ENCODE measurements at regions of chr7 and their contacts with region 1.

Region 1: GRCh38 chr7:142782922-142783900 is 12.4 kb downstream of the PRSS2 start:
- DNase-seq: peak; percentile 27
- H3K4me3 ChIP-seq: peak overlapping the region; percentile 42
- H3K27me3 ChIP-seq: no peaks in the 10 kb centered on the region; the same call in none of the 2 replicates
- CTCF ChIP-seq: peak; percentile 93

Region 2: GRCh38 chr7:142459551-142459963 is 323.7 kb before region 1 on chr7:
- CTCF ChIA-PET with region 1: interaction called, 20 read pairs
- POLR2A ChIA-PET with region 1: interaction called, 4 read pairs
- DNase-seq: peak; percentile 41
- H3K4me3 ChIP-seq: no peak overlapping the region
- H3K27me3 ChIP-seq: no peaks in the 10 kb centered on the region
- CTCF ChIP-seq: peak; percentile 75

Region 3: DNA sequence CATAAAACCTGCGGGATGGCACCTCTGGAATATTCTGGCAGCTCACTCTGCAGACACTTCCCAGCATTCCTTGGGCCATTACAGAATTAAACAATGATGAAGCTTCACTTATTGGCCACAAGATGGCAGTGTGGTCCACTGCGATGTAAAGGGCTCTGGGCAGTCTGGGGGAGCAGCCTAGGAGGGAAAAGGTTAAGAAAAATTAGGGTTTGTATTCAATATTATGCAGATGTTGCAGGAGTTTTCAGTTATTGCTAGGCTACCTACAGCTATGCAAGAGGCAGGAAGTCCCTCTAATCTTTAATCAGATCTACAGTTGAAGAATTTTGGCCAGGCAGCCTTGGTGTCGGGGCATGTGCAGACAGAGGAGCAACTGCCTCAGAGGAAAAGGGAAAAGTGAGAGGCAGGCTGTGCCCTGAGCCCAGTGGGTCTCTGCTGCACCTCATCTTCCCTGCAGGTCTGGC is 267.1 kb before region 1 on chr7:
- CTCF ChIA-PET with region 1: interaction called, 40 read pairs
- POLR2A ChIA-PET with region 1: no interaction called
- DNase-seq: no peak
- H3K4me3 ChIP-seq: no peak overlapping the region
- H3K27me3 ChIP-seq: peaks cover 2% of the 10 kb centered on the region
- CTCF ChIP-seq: peak; percentile 83

Region 4: GRCh38 chr7:142603870-142604448 is 179.3 kb before region 1 on chr7:
- CTCF ChIA-PET with region 1: interaction called, 64 read pairs
- POLR2A ChIA-PET with region 1: no interaction called
- DNase-seq: no peak
- H3K4me3 ChIP-seq: no peak overlapping the region
- H3K27me3 ChIP-seq: no peaks in the 10 kb centered on the region
- CTCF ChIP-seq: peak; percentile 87

Region 5: GRCh38 chr7:142714375-142714774 is 68.8 kb before region 1 on chr7:
- CTCF ChIA-PET with region 1: interaction called, 12 read pairs
- POLR2A ChIA-PET with region 1: no interaction called
- DNase-seq: no peak
- H3K4me3 ChIP-seq: no peak overlapping the region
- H3K27me3 ChIP-seq: peaks cover 7% of the 10 kb centered on the region; the same call in 1 of the 2 replicates
- CTCF ChIP-seq: no peak

Region 6: GRCh38 chr7:142811154-142811737 is 28.0 kb after region 1 on chr7:
- CTCF ChIA-PET with region 1: interaction called, 10 read pairs
- POLR2A ChIA-PET with region 1: no interaction called
- DNase-seq: no peak
- H3K4me3 ChIP-seq: no peak overlapping the region
- H3K27me3 ChIP-seq: peaks cover 6% of the 10 kb centered on the region; the same call in 1 of the 2 replicates
- CTCF ChIP-seq: peak; percentile 71